Psoas muscle (tissue), 8 donors: ENCODE measurements at regions of chr5 and their contacts with region 1.

Region 1: GRCh38 chr5:127030259-127031146 is at the start of gene MARCHF3:
- DNase-seq: peak; percentile 95 to 98
- ATAC-seq: peak; percentile 96 to 99 (median 98)
- H3K4me3 ChIP-seq: peak within 1 kb of the TSS; percentile 93
- H3K27ac ChIP-seq: peak within 1 kb of the TSS; percentile 87
- H3K4me1 ChIP-seq: peaks cover 17% of the 10 kb centered on the region
- H3K27me3 ChIP-seq: no peaks in the 10 kb centered on the region
- CTCF ChIP-seq: peak; percentile 30
- total RNA-seq, gene MARCHF3: 9.2 to 16.2 (median 12.4) TPM

Region 2: DNA sequence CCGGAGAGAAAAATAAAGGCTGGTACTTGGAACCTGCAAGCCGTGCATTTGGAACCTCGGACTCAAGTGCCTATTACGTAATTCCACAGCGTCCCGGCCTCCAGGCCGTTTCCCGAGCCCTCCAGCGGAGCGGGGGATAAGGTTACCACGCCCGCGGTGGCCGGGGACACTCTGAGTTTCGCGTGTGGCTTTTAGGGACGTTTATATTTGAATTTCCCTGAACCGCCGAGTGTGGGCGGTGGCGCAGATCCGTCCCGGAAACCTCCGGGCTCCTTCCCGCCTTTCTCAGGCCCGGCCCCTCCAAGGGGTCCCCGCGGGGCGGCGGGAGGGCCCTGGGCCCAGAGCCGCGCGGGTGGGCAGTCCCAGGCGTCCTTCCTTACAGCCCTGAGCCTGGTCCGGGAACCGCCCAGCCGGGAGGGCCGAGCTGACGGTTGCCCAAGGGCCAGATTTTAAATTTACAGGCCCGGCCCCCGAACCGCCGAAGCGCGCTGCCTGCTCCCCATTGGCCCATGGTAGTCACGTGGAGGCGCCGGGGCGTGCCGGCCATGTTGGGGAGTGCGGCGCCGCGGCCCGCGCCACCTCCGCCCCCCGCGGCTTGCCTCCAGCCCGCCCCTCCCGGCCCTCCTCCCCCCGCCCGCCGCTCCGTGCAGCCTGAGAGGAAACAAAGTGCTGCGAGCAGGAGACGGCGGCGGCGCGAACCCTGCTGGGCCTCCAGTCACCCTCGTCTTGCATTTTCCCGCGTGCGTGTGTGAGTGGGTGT is 253.8 kb before region 1 on chr5 and contains the start of gene LMNB1:
- intact Hi-C with region 1: loop called in 1 of 2 experiments (anchors 5 kb)
- DNase-seq: peak; percentile 95 to 96
- ATAC-seq: peak; percentile 94 to 97 (median 96)
- H3K4me3 ChIP-seq: peak within 1 kb of the TSS; percentile 92
- H3K27ac ChIP-seq: peak within 1 kb of the TSS; percentile 96
- H3K4me1 ChIP-seq: peaks cover 8% of the 10 kb centered on the region
- H3K27me3 ChIP-seq: no peaks in the 10 kb centered on the region
- CTCF ChIP-seq: no peak
- total RNA-seq, gene LMNB1: 1.4 to 4.1 (median 2.1) TPM

Region 3: GRCh38 chr5:126852091-126852571 is 178.4 kb before region 1 on chr5:
- intact Hi-C with region 1: loop called in 1 of 2 experiments (anchors 5 kb)
- DNase-seq: peak in 1 of 2 donors; percentile 32
- ATAC-seq: peak; percentile 41 to 74 (median 62)
- H3K4me3 ChIP-seq: peak overlapping the region; percentile 33
- H3K27ac ChIP-seq: peak overlapping the region; percentile 37
- H3K4me1 ChIP-seq: peaks cover 6% of the 10 kb centered on the region
- H3K27me3 ChIP-seq: no peaks in the 10 kb centered on the region
- CTCF ChIP-seq: no peak

Region 4: GRCh38 chr5:126869005-126869451 is 161.5 kb before region 1 on chr5:
- intact Hi-C with region 1: loop called (anchors 5 to 10 kb)
- DNase-seq: peak in 1 of 2 donors; percentile 30
- ATAC-seq: peak in 1 of 4 donors; percentile 41
- H3K4me3 ChIP-seq: peak overlapping the region; percentile 32
- H3K27ac ChIP-seq: no peak overlapping the region
- H3K4me1 ChIP-seq: no peaks in the 10 kb centered on the region
- H3K27me3 ChIP-seq: no peaks in the 10 kb centered on the region
- CTCF ChIP-seq: no peak

Region 5: GRCh38 chr5:127072861-127073846 is 42.7 kb after region 1 on chr5 and contains the start of gene C5orf63:
- intact Hi-C with region 1: loop called (anchors 2 to 5 kb)
- DNase-seq: peak; percentile 73 to 84
- ATAC-seq: peak; percentile 97 to 99 (median 99)
- H3K4me3 ChIP-seq: peak within 1 kb of the TSS; percentile 76
- H3K27ac ChIP-seq: peak within 1 kb of the TSS; percentile 72
- H3K4me1 ChIP-seq: no peaks in the 10 kb centered on the region
- H3K27me3 ChIP-seq: no peaks in the 10 kb centered on the region
- CTCF ChIP-seq: peak; percentile 52
- total RNA-seq, gene C5orf63: 5.3 to 7.6 (median 7.0) TPM

Region 6: DNA sequence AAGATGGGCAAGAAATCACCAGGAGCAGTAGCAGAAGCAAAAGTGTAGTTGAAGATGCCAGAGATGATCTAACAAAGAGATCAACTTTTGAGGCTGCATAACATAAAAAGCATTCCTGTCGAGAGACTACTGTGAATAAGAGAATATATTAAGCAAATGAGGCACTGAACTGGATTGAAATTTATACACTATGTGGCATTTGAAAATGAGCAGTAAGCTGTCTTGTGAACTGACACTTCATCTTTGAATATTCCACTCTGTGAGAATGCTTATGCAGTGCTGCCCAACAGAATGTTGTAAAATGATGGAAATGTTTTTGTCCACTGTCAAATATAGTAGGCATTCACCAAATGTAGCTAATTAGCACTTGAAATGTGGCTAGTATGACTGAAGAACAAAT is 468.0 kb after region 1 on chr5:
- intact Hi-C with region 1: no loop called
- DNase-seq: no peak
- ATAC-seq: no peak
- H3K4me3 ChIP-seq: no peak overlapping the region
- H3K27ac ChIP-seq: no peak overlapping the region
- H3K4me1 ChIP-seq: no peaks in the 10 kb centered on the region
- H3K27me3 ChIP-seq: no peaks in the 10 kb centered on the region
- CTCF ChIP-seq: no peak